Astrocyte of the cerebellum (primary cell): ENCODE measurements at regions of chr2 and their contacts with region 1.

Region 1: GRCh38 chr2:240259924-240260529 is 119.6 kb upstream of the OTOS start:
- DNase-seq: no peak
- H3K4me3 ChIP-seq: no peak overlapping the region
- CTCF ChIP-seq: no peak

Region 2: DNA sequence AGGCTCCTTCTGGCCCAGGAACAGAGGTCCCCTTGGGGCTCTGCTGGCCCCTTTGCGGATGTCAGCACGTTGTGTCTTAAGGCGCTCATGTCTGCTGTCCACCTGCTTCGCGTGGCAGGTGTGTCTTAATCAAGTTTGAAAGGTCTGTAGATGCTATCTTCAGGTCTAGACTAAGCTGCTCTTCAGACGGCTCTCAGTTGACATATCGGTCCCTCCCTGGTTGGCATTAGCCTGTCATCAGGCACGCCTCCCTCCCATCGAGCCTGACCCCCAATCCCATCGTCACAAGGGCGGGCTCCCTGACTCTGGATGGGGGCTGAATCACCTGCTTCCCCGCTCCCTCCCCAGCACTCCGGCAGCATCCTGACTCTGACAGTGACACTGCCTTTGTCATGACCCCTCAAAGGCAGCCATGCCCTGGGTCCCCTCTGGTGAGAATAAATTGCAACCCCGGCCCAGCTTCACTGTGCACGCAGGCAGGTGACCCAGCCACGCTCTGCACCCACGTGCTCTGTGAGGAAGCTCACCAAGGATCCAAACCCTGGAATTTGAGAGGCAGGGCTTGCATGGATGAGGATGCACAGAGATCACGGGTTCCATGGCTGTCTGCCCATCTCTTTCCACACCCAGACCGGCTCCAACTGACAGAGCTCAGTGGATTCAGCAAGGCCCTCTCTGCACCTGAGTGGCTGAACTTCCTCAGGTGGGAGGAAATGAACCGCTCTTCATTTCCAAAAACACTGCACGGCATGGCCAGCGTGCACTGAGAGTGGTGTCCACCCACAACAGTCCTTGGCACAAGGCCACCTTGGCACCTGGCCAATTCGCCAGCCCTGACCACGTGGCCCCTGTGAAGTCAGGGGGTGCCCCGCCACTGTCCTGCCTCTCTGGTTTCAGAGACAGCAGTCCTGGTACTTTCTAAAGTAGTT is 65.3 kb after region 1 on chr2:
- in situ Hi-C with region 1: loop called (anchors 5 kb)
- DNase-seq: no peak
- H3K4me3 ChIP-seq: no peak overlapping the region
- CTCF ChIP-seq: no peak